ENCODE measurements at regions of chr12 and their contacts with region 1.

Region 1: DNA sequence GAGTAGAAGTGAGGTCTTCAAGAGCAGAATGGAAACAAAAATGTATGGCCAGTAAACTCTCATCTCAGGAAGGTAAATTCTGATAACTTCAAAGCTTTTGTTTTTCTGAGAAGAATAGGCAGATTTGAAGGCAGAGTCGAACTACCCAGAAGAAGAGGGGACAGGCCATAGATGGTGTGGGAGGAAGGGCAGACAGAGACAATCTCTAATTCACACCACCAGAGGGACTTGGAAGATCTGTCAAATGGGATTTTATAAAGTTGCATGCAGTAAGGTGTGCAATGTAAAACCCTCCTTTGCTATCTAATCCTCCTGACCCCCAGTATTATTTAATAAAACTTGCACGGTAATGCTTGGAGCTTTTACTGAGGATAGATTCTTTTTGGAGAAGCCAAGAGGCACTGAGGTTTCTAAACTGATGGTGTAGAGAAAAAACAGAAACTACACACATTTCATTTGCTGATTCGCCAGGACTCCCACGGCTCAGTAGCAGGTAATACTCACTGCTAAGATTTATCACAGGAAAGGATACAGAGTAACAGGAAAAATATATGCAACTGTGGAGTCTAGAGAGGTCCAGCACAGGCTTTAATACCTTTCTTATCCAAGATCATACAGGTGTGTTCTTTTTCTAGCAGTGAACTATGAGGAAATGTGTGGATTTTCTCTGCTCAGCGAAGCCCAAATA is 18.3 kb downstream of the SLC38A2 start:
- DNase-seq: no peak
- H3K4me3 ChIP-seq: no peak overlapping the region
- H3K27ac ChIP-seq: no peak overlapping the region
- H3K4me1 ChIP-seq: no peaks in the 10 kb centered on the region
- H3K27me3 ChIP-seq: no peaks in the 10 kb centered on the region
- CTCF ChIP-seq: no peak
- POLR2A ChIP-seq: no peak

Region 2: DNA sequence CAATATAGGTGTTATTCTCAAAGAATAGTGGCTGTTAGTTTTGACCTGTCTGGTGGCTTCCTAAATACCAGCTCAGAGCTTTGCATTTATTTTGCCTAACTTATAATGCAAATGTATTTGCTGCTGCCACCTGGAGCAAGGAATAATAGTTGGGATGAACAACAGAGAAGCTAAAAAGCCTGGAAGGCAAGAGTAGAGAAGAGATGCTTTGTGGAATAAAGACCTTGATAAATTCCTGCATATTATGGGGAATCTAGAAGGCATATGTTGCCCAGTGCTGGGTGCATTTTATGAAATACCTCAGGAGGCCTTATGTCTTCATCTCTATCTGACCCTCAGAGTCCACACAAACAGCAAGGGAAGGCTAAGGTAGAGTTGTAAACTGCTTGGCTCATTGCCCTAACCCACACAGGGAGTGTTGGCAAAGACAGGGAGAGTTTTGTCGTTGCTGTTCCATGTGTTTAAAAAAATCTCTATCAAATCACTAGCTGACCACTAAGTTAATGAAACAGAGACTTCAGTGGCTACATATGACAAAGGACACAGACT is 310.2 kb before region 1 on chr12:
- intact Hi-C with region 1: loop called (anchors 5 kb)
- DNase-seq: no peak
- H3K4me3 ChIP-seq: no peak overlapping the region
- H3K27ac ChIP-seq: no peak overlapping the region
- H3K4me1 ChIP-seq: no peaks in the 10 kb centered on the region
- H3K27me3 ChIP-seq: no peaks in the 10 kb centered on the region
- CTCF ChIP-seq: no peak
- POLR2A ChIP-seq: no peak

Region 3: GRCh38 chr12:46382964-46383653 is 28.9 kb after region 1 on chr12:
- intact Hi-C with region 1: no loop called
- DNase-seq: peak; percentile 95 to 98
- H3K4me3 ChIP-seq: peak overlapping the region; percentile 76 to 78 (median 77)
- H3K27ac ChIP-seq: peak overlapping the region; percentile 98 to 100
- H3K4me1 ChIP-seq: peaks cover 0 to 24% of the 10 kb centered on the region in 2 donors
- H3K27me3 ChIP-seq: no peaks in the 10 kb centered on the region
- CTCF ChIP-seq: peak in 1 of 3 donors; percentile 24
- POLR2A ChIP-seq: peak; percentile 72

Measured in breast epithelium (tissue), 4 donors.